A673 (cell line): ENCODE measurements at regions of chr4 and their contacts with region 1.

Region 1: DNA sequence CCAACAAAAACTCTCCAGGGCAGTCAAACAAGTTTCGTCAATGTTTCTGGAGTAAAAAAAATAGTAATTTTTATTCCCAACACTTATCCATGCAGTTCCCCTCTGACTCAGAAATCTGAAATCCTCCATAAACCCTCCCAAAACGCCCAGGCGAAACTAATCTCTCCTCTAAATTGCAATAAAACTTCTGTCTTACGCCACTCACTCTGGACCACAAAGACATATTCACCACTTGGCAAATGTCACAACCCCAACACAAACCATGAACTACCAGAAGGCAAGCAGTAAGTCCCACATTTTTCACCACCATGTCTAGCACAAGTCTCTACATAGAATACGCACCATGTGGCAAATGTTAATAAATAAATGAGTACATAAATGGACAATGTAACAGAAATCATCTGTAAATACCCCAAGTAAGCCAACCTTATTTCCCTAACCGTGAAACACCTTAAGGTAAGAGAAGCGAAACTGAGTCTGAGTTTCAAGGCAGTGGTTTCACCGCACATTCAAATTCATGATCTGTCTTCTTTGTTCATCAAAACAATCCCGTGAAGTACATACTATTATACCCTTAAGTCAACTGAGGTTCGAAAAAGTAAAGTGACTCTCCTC is 1.6 kb downstream of the PAPSS1 start:
- DNase-seq: no peak
- H3K4me3 ChIP-seq: peak overlapping the region; percentile 67
- H3K27ac ChIP-seq: peak overlapping the region; percentile 38
- H3K4me1 ChIP-seq: peaks cover 50% of the 10 kb centered on the region
- H3K27me3 ChIP-seq: no peaks in the 10 kb centered on the region
- CTCF ChIP-seq: no peak

Region 2: DNA sequence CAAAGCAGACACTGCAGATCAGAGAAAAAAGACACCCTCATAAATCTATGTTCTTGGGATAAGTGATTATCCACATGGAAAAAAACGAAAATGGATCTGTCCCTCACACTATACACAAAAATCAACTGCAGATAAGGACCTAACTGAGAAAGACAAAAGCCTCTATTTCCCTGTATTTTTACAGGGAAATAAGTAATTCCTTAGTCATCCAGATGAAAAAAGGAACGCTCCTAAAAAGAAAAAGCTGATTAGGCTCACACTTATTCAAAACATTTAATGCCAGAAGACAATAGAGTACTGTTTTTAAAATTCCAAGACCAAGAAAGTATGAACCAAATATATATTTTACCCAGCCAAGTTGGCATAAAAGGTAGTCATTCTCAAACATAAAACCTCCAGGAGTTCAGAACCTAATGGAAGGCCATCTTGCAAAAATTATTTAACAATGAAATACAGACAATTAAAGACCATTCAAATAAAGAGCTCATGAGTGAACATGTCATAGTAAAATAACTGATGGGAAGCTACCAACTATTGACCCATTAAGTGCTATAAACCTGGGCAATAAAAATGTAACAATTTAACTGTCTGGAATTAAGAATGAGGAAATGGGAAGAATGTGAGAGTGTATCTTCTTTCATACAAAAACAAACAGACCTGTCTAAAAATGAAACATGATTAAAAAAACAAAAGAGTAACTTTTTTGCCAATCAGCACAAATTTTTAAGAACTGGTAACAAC is 18.8 kb before region 1 on chr4:
- CTCF ChIA-PET with region 1: no interaction called
- POLR2A ChIA-PET with region 1: interaction called, 12 read pairs
- intact Hi-C with region 1: no loop called
- DNase-seq: no peak
- H3K4me3 ChIP-seq: no peak overlapping the region
- H3K27ac ChIP-seq: no peak overlapping the region
- H3K4me1 ChIP-seq: no peaks in the 10 kb centered on the region
- H3K27me3 ChIP-seq: no peaks in the 10 kb centered on the region
- CTCF ChIP-seq: no peak